A549 (cell line): ENCODE measurements at regions of chr19 and their contacts with region 1.

Region 1: DNA sequence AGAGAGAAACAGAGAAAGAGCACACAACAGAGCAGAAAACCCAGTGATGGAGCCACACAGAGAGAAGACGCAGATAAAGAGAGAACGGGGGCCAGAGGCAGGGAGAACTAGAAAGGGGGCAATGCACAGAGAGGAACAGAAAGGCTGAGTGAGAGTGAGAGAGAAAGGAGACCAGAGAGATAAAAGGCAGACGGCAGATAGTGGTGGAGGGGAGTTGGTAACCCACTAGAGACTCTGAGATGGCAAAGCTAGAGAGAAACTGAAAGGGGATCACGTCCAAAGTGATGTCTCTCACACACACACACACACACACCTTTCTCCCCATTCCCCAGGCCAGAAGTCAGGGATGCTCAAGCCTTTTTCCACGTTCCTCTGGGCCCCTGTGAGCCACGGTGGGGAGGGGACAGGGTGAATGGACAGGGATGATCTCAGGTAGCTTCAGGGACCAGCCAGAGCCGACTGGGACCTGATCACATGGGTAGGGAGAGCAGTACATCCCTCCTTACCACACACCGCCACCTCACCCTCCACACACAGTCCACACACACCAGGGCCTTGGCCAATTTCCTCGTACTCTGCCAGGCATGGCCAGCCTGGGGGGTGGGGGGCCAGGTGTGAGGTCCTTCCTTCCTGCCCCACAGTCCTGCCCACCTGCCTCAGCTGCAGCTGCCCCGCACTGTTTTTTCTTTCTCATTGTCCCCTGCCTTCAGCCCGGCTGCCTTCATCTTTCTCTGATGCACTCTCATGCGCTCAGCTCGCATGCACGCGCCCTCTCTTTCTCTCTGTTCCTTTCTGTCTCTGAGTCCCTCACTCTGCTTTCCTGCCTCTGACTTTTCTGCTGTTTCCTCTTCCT is 22.5 kb upstream of the POU2F2 start:
- DNase-seq: no peak
- ATAC-seq: peak; percentile 28 to 57; a peak in 3 of 6 replicates
- H3K4me3 ChIP-seq: no peak overlapping the region
- H3K27ac ChIP-seq: no peak overlapping the region
- H3K4me1 ChIP-seq: no peaks in the 10 kb centered on the region
- CTCF ChIP-seq: no peak
- EP300 ChIP-seq: no peak
- POLR2A ChIP-seq: no peak
- RAD21 ChIP-seq: no peak

Region 2: DNA sequence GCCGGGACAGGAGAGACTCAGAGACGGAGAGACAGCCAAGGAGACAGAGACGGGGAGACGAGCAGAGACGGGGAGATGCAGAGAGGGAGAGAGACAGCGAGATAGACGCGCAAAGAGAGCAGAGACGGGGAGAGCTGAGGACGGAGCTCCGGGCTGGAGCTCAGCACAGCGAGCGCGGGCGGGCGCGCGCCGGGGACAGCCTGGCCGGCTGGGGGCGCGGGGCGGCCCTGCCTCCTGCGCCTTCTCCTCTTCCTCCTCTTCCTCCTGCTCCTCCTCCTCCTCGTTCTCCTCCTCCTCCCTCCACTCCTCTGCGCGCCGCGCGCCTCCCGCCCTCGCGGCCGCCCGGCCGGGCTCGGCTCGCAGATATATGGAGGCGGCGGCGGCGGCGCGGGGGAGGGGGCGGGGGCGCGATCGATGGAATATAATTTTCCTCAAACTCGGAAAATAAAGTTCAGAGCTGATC is 226.4 kb before region 1 on chr19 and contains the start of gene ERFL:
- CTCF ChIA-PET with region 1: no interaction called
- POLR2A ChIA-PET with region 1: no interaction called
- DNase-seq: no peak
- ATAC-seq: peak; percentile 33 to 61
- H3K4me3 ChIP-seq: peak within 1 kb of the TSS; percentile 59
- H3K27ac ChIP-seq: peak within 1 kb of the TSS; percentile 29 to 77; a peak in 4 of 6 replicates
- H3K4me1 ChIP-seq: peaks cover 13% of the 10 kb centered on the region; the same call in 1 of the 3 replicates
- CTCF ChIP-seq: 0 out of 3 replicates have a peak, but pooled peaks have one; percentile 21
- EP300 ChIP-seq: no peak
- POLR2A ChIP-seq: no peak
- RAD21 ChIP-seq: no peak
- polyA plus RNA-seq, gene ERFL: 0.19 and 0.21 TPM in 2 replicates

Region 3: DNA sequence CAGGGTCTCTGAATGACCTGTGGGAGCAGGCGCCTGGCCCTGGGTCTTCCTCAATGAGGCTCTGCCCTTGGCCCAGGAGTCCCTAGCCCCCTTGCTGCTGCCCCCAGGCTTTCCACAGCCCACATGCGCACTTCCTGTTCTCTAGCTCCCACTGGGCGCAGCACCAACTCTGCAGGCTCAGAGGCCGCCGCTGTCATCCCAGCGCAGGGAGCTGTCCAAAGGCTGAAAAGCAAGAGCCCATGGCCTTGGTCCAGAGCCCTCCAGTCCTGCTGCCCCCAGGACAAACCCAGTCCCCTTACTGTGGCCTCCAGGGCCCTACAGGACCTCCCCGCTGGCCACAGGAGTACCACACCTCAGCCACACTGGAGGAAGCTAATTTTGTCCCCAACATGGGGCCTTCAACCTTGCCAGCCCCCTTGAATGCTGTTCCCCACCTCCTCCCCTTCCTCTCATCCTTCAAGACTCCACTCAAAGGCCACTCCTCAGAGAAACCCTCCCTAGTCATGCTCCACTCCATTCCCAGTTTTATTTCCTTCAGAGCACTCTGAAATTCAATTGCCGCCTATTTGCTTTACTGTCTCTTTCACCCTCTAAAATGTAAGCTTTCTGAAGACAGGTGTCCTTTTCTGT is 14.5 kb before region 1 on chr19:
- CTCF ChIA-PET with region 1: interaction called, 116 read pairs
- POLR2A ChIA-PET with region 1: no interaction called
- DNase-seq: peak in 1 of 2 experiments; percentile 53
- ATAC-seq: peak; percentile 72 to 81
- H3K4me3 ChIP-seq: no peak overlapping the region
- H3K27ac ChIP-seq: no peak overlapping the region
- H3K4me1 ChIP-seq: no peaks in the 10 kb centered on the region
- CTCF ChIP-seq: no peak
- EP300 ChIP-seq: no peak
- POLR2A ChIP-seq: no peak
- RAD21 ChIP-seq: 0 out of 5 replicates have a peak, but pooled peaks of 1 of the 2 experiments have one; percentile 9